ENCODE measurements at regions of chr2 and their contacts with region 1.

Region 1: DNA sequence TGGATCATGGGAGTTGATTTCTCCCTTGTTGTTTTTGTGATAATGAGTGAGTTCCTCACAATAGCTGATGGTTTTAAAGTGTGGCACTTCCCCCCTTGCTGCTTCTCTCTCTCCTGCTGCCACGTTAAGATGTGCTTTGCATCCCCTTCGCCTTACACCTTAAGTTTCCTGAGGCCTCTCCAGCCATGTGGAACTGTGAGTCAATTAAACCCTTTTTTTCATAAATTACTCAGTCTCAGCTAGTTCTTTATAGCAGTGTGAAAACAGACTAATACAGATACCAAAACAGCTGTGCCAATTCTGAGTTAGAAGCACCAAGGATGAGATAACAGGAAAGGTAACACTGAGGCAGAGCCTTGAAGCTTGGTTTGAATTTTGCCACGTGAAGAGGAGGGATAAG is 44.7 kb downstream of the ITSN2 start:
- DNase-seq: no peak
- ATAC-seq: no peak
- H3K4me3 ChIP-seq: no peak overlapping the region
- H3K27ac ChIP-seq: no peak overlapping the region
- H3K4me1 ChIP-seq: peaks cover 0 to 26% (median 11%) of the 10 kb centered on the region in 12 donors
- H3K27me3 ChIP-seq: no peaks in the 10 kb centered on the region
- CTCF ChIP-seq: no peak
- POLR2A ChIP-seq: no peak

Region 2: DNA sequence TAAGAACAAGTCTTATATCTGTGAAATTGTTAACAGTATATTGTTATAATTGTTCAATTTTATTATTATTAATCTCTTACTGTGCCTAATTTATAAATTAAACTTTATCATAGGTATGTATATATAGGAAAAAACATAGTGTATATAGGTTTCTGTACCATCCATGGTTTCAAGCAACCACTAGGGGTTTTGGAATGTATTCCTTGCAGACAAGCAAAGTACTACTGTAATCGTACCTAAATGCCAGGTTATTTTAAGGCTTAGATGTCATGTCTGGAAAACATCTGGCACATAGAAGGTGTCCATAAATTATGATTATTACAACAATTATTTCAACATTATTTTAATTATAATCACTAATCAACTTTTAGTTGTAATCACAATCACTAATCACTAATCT is 36.3 kb after region 1 on chr2:
- intact Hi-C with region 1: loop called in 2 of 10 experiments (anchors 5 kb)
- DNase-seq: no peak
- ATAC-seq: peak in 2 of 4 donors; percentile 52 to 55
- H3K4me3 ChIP-seq: no peak overlapping the region
- H3K27ac ChIP-seq: peak overlapping the region in 6 of 12 donors; percentile 18 to 40 (median 24)
- H3K4me1 ChIP-seq: peaks cover 6 to 71% (median 45%) of the 10 kb centered on the region in 12 donors
- H3K27me3 ChIP-seq: no peaks in the 10 kb centered on the region
- CTCF ChIP-seq: peak in 6 of 12 donors; percentile 5 to 39 (median 16)
- POLR2A ChIP-seq: no peak

Region 3: DNA sequence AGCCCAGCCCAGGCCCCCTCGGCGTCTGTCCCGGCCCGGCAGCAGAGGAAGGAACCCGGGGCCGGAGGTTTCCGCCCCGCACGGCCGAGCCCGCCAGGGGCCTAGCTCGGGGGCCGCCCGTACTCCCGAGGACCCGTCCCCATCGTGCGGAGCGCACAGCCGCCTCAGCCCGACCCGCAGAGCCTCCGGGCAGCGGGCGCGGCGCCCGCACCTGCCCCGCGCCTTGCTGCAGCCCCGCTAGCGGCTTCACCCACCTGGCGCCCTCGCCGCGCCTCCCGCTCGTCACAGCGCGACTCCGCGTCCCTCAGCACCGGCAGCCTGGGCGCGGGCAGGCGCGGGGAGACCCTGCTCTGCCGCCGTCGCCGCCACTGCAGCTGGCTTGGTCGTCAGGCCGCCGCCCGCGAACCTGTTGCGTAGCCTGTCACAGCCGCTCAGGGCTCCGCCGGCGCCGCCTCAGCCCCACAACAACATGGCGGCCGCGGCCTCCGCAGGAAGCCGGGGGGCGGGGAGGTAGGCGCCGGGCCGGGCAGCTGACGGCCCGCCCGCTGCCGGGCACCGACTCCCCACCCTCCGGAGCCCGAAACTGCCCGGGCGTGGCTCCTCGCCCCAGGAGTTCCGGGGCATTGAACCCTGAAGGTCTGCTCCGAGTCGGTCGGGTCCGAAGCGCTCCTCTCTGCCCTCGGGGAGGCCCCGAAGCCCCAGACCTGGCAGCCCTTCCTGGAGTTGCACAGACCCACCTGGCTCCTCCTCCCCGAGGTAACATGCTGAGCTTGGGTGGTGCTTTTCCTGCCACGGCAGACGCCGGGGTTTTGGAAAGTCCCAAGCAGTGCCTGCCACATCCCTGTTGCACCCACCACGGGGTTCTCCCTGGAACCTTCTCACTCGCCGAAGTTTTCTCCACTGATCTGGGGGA is 44.6 kb after region 1 on chr2 and contains the start of gene ITSN2:
- intact Hi-C with region 1: loop called in 2 of 10 experiments (anchors 5 to 10 kb)
- DNase-seq: peak; percentile 83 to 93 (median 87)
- ATAC-seq: peak; percentile 68 to 95 (median 88)
- H3K4me3 ChIP-seq: peak within 1 kb of the TSS; percentile 64 to 100 (median 96)
- H3K27ac ChIP-seq: peak within 1 kb of the TSS; percentile 79 to 99 (median 98)
- H3K4me1 ChIP-seq: peaks cover 0 to 35% (median 21%) of the 10 kb centered on the region in 12 donors
- H3K27me3 ChIP-seq: no peaks in the 10 kb centered on the region
- CTCF ChIP-seq: no peak
- POLR2A ChIP-seq: peak in 1 of 2 donors; percentile 59
- total RNA-seq, gene ITSN2: 30.6 to 55.0 (median 40.0) TPM